PC-3 (cell line): ENCODE measurements at regions of chr14 and their contacts with region 1.

Region 1: GRCh38 chr14:90940318-90940962 is 120.0 kb downstream of the RPS6KA5 start:
- DNase-seq: peak; percentile 44
- ATAC-seq: peak; percentile 98
- H3K4me3 ChIP-seq: no peak overlapping the region
- H3K27ac ChIP-seq: peak overlapping the region; percentile 9; the same call in 1 of the 2 replicates
- H3K4me1 ChIP-seq: peaks cover 4% of the 10 kb centered on the region; the same call in 1 of the 2 replicates
- H3K27me3 ChIP-seq: no peaks in the 10 kb centered on the region
- CTCF ChIP-seq: no peak

Region 2: GRCh38 chr14:90995785-90996184 is 55.3 kb after region 1 on chr14:
- CTCF ChIA-PET with region 1: no interaction called
- POLR2A ChIA-PET with region 1: no interaction called
- intact Hi-C with region 1: loop called (anchors 2 kb)
- DNase-seq: peak; percentile 33
- ATAC-seq: peak; percentile 54; the same call in 1 of the 2 replicates
- H3K4me3 ChIP-seq: peak overlapping the region; percentile 36; the same call in 1 of the 2 replicates
- H3K27ac ChIP-seq: peak overlapping the region; percentile 54; the same call in 1 of the 2 replicates
- H3K4me1 ChIP-seq: peaks cover 17% of the 10 kb centered on the region
- H3K27me3 ChIP-seq: no peaks in the 10 kb centered on the region
- CTCF ChIP-seq: no peak